ENCODE measurements at regions of chr15 and their contacts with region 1.

Region 1: GRCh38 chr15:101115786-101116680 is 135.8 kb downstream of the CHSY1 start:
- DNase-seq: peak in 4 of 7 donors; percentile 35 to 64 (median 48)
- H3K4me3 ChIP-seq: no peak overlapping the region
- H3K27ac ChIP-seq: peak overlapping the region in 2 of 5 donors; percentile 44 to 78
- H3K4me1 ChIP-seq: peaks cover 1 to 13% of the 10 kb centered on the region in 2 donors
- H3K27me3 ChIP-seq: no peaks in the 10 kb centered on the region
- CTCF ChIP-seq: no peak
- POLR2A ChIP-seq: no peak

Region 2: DNA sequence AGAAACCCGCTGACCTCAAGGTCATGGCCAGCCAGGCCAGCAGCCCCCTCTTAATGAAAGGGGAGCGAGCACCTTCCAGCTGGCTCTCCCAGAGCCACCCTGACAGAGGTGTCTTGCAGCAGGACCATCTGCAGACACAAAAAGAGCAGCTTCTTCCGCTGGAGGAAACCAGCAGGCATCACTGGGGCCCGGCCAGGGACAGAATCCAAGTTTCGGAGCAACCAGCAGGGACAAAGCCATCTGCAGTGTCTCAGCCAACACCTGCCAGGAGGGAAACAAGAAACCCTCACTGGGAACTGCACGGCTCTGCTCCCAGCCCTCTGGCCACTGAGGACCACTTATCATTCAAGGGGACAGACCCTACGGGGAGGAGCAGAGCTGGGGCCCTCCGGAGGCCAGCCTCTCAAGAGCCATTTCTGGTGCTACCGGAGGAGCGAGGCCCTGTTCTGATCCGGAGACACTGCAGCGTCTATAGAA is 46.6 kb after region 1 on chr15:
- intact Hi-C with region 1: loop called in 1 of 2 experiments (anchors 5 kb)
- DNase-seq: peak in 2 of 7 donors; percentile 45 to 79
- H3K4me3 ChIP-seq: no peak overlapping the region
- H3K27ac ChIP-seq: peak overlapping the region in 2 of 5 donors; percentile 17 to 27
- H3K4me1 ChIP-seq: peaks cover 0 to 12% of the 10 kb centered on the region in 2 donors
- H3K27me3 ChIP-seq: no peaks in the 10 kb centered on the region
- CTCF ChIP-seq: no peak
- POLR2A ChIP-seq: no peak

Region 3: DNA sequence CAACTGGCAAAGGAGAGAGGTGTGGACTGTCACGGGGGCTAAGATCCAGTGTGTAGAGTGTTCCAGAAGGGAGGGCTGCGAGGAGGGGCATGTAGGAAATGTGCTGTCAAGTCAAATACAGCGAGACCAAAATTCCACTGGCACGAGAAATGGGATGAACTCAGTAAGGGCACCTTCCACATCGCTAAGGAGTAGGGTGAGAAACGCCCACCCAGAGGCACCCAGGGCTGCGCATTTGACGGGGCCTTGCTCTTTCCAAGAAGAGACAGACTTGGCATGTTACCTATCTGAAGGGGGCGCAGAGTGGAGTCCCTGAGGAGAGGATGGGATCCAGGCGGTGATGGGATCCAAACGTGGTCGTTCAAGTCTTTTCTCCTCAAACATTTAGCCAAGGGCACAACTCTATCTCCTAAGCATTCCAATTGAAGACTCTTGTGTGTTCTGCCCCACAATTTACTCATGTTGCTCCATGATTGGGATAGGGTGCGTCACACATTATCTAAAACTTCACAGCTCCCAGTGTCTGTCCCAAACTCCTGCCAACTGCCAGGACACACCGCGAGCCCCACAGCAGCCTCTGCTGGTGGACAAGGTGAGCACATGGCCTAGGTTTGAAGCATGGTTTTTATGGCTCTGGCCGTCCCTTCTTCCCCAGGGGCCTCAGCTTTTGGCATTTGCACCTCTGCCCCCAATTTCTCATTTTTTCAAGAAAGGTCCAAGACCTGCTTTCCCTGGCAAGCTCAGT is 153.6 kb after region 1 on chr15:
- intact Hi-C with region 1: loop called in 1 of 2 experiments (anchors 10 kb)
- DNase-seq: peak in 1 of 7 donors; percentile 46
- H3K4me3 ChIP-seq: no peak overlapping the region
- H3K27ac ChIP-seq: no peak overlapping the region
- H3K4me1 ChIP-seq: no peaks in the 10 kb centered on the region
- H3K27me3 ChIP-seq: no peaks in the 10 kb centered on the region
- CTCF ChIP-seq: peak in 3 of 6 experiments; percentile 10 to 20 (median 18)
- POLR2A ChIP-seq: no peak